ENCODE measurements at regions of chr20 and their contacts with region 1.

Region 1: GRCh38 chr20:14055127-14055742 is 59.9 kb downstream of the MACROD2 start:
- DNase-seq: peak; percentile 77
- ATAC-seq: peak; percentile 70
- H3K4me3 ChIP-seq: no peak overlapping the region
- H3K27ac ChIP-seq: no peak overlapping the region
- H3K4me1 ChIP-seq: no peaks in the 10 kb centered on the region
- H3K27me3 ChIP-seq: no peaks in the 10 kb centered on the region
- CTCF ChIP-seq: peak; percentile 78
- EP300 ChIP-seq: no peak
- POLR2A ChIP-seq: no peak
- RAD21 ChIP-seq: peak; percentile 60

Region 2: GRCh38 chr20:13819885-13820645 is 235.2 kb before region 1 on chr20:
- CTCF ChIA-PET with region 1: interaction called, 18 read pairs
- POLR2A ChIA-PET with region 1: no interaction called
- in situ Hi-C with region 1: loop called (anchors 5 kb)
- intact Hi-C with region 1: loop called (anchors 1 kb)
- DNase-seq: peak; percentile 70
- ATAC-seq: peak; percentile 71
- H3K4me3 ChIP-seq: no peak overlapping the region
- H3K27ac ChIP-seq: no peak overlapping the region
- H3K4me1 ChIP-seq: 0 out of 2 replicates have a peak, but pooled peaks cover under 1% of the 10 kb centered on the region
- H3K27me3 ChIP-seq: no peaks in the 10 kb centered on the region
- CTCF ChIP-seq: peak; percentile 71
- EP300 ChIP-seq: no peak
- POLR2A ChIP-seq: no peak
- RAD21 ChIP-seq: peak; percentile 35; the same call in 1 of the 2 replicates

Region 3: DNA sequence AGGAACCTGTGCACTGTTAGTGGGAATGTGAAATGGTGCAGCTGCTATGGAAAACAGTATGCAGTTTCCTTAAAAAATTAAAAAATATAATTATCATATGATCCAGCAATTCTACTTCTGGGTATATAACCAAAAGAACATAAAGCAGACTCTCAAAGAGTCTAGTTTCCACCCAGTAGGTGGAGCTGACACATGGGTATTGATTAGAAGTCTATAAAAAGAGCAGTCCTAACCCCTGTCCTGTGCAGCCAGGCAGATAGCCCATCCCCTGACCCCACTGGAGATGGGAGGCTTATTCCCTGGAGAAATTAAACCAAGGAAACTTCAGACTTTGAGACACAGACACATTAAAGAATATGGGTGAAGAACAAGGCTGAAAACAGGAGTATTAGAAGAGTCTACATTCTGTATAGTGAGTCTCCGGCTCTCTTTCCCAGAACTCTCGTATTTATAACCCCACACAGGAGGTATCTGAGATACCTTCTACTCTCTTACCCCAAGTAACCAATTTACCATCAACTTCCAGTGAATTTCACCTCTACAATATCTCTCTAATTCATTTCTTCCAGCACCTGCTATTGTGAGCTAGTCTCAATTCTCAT is 157.1 kb before region 1 on chr20:
- CTCF ChIA-PET with region 1: interaction called, 10 read pairs
- POLR2A ChIA-PET with region 1: no interaction called
- in situ Hi-C with region 1: no loop called
- intact Hi-C with region 1: loop called (anchors 1 kb)
- DNase-seq: peak; percentile 53
- ATAC-seq: peak; percentile 97
- H3K4me3 ChIP-seq: no peak overlapping the region
- H3K27ac ChIP-seq: no peak overlapping the region
- H3K4me1 ChIP-seq: no peaks in the 10 kb centered on the region
- H3K27me3 ChIP-seq: no peaks in the 10 kb centered on the region
- CTCF ChIP-seq: peak; percentile 40; the same call in 1 of the 2 replicates
- EP300 ChIP-seq: no peak
- POLR2A ChIP-seq: no peak
- RAD21 ChIP-seq: 0 out of 2 replicates have a peak, but pooled peaks have one; percentile 23

Region 4: GRCh38 chr20:14033310-14033709 is 21.9 kb before region 1 on chr20:
- CTCF ChIA-PET with region 1: no interaction called
- POLR2A ChIA-PET with region 1: no interaction called
- in situ Hi-C with region 1: no loop called
- intact Hi-C with region 1: loop called (anchors 2 kb)
- DNase-seq: no peak
- ATAC-seq: no peak
- H3K4me3 ChIP-seq: no peak overlapping the region
- H3K27ac ChIP-seq: no peak overlapping the region
- H3K4me1 ChIP-seq: no peaks in the 10 kb centered on the region
- H3K27me3 ChIP-seq: no peaks in the 10 kb centered on the region
- CTCF ChIP-seq: no peak
- EP300 ChIP-seq: no peak
- POLR2A ChIP-seq: no peak
- RAD21 ChIP-seq: no peak

Region 5: DNA sequence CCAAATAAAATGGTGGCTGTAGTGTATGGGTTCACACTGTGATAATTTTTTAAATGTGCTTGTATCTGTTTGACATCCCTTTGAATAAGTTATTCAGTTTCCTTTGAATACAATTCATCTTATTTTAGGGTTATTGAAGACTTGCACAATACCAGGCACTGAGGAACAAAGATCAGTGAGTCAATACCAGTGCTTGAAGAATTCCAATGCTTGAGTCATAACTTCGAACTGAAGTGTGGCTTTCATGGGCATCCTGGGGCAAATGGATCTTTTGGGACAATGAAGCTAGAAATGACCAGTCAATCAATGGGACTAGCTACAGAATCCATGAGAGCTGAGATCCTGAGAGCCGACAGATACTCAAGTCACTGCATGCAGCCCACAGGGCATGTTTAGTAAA is 632.1 kb after region 1 on chr20:
- CTCF ChIA-PET with region 1: no interaction called
- POLR2A ChIA-PET with region 1: no interaction called
- in situ Hi-C with region 1: no loop called
- intact Hi-C with region 1: no loop called
- DNase-seq: no peak
- ATAC-seq: no peak
- H3K4me3 ChIP-seq: no peak overlapping the region
- H3K27ac ChIP-seq: no peak overlapping the region
- H3K4me1 ChIP-seq: no peaks in the 10 kb centered on the region
- H3K27me3 ChIP-seq: no peaks in the 10 kb centered on the region
- CTCF ChIP-seq: no peak
- EP300 ChIP-seq: no peak
- POLR2A ChIP-seq: no peak
- RAD21 ChIP-seq: no peak